GM12878 (cell line): ENCODE measurements at regions of chr12 and their contacts with region 1.

Region 1: GRCh38 chr12:45543906-45544315 is 185.6 kb upstream of the ARID2 start:
- DNase-seq: peak; percentile 56
- ATAC-seq: peak; percentile 99
- H3K4me3 ChIP-seq: no peak overlapping the region
- H3K27ac ChIP-seq: no peak overlapping the region
- H3K4me1 ChIP-seq: no peaks in the 10 kb centered on the region
- H3K27me3 ChIP-seq: no peaks in the 10 kb centered on the region
- CTCF ChIP-seq: peak; percentile 73 to 84 (median 83)
- EP300 ChIP-seq: no peak
- POLR2A ChIP-seq: no peak
- RAD21 ChIP-seq: peak; percentile 96

Region 2: DNA sequence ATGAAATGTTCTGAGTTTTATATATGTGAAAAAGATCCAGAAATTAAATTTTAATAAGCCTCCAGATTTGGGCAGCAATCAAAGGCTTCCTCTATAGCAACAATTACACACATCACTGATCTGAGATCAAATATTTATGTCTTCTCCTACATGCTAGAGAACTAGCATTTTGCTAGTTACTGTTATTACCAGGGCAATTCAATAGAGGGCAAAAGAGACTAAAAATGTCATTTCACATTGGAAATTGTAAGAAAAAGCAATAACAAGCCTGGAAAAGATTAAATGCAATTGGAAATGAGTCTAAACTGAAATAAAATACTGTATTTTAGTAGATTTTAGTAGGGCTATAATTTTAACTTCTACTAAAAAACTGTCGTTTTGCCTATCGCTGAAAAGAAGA is 360.7 kb before region 1 on chr12:
- CTCF ChIA-PET with region 1: interaction called, 14 read pairs
- POLR2A ChIA-PET with region 1: no interaction called
- RAD21 ChIA-PET with region 1: interaction called, 8 read pairs
- SMC1A ChIA-PET with region 1: interaction called, 4 read pairs
- in situ Hi-C with region 1: no loop called
- intact Hi-C with region 1: no loop called
- DNase-seq: no peak
- ATAC-seq: 0 out of 3 replicates have a peak, but pooled peaks have one; percentile 28
- H3K4me3 ChIP-seq: no peak overlapping the region
- H3K27ac ChIP-seq: no peak overlapping the region
- H3K4me1 ChIP-seq: no peaks in the 10 kb centered on the region
- H3K27me3 ChIP-seq: no peaks in the 10 kb centered on the region
- CTCF ChIP-seq: peak in 2 of 3 experiments; percentile 3 to 30; a peak in 3 of 6 replicates
- EP300 ChIP-seq: no peak
- POLR2A ChIP-seq: no peak
- RAD21 ChIP-seq: peak; percentile 47

Region 3: DNA sequence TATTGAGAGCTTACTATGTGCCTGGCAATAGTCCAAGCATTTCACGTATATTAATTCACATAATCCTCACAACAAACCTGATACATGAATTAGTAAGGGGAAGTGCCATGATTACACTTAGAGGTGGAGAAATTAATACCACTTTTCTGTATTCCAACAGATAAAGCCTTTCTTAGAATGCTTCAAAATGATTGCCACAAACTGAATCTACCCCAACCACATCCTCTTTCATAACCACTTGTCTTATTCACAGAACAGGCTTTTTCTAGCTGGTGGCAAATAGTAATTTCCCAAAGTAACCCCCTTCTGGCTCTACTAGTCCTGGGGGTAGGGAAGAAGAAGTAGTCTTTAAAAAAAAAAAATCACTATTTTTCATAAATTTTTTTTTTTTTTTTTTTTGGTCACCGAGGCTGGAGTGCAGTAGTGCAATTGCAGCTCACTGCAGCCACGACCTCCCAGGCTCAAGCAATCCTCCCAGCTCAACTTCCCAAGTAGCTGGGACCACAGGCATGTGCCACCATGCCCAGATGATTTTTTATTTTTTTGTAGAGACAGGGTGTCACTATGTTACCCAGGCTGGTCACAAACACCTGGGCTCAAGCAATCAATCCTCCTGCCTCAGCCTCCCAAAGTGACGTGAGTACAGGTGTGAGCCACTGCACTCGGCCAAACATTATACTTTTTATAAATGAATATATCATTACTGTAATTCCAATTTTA is 126.6 kb after region 1 on chr12:
- CTCF ChIA-PET with region 1: interaction called, 6 read pairs
- POLR2A ChIA-PET with region 1: interaction called, 3 read pairs
- RAD21 ChIA-PET with region 1: interaction called, 15 read pairs
- SMC1A ChIA-PET with region 1: interaction called, 4 read pairs
- in situ Hi-C with region 1: no loop called
- intact Hi-C with region 1: loop called (anchors 5 kb)
- DNase-seq: peak; percentile 53
- ATAC-seq: peak; percentile 75
- H3K4me3 ChIP-seq: no peak overlapping the region
- H3K27ac ChIP-seq: no peak overlapping the region
- H3K4me1 ChIP-seq: peaks cover 19% of the 10 kb centered on the region
- H3K27me3 ChIP-seq: no peaks in the 10 kb centered on the region
- CTCF ChIP-seq: no peak
- EP300 ChIP-seq: peak in 1 of 2 experiments; percentile 23; a peak in 1 of 4 replicates
- POLR2A ChIP-seq: no peak
- RAD21 ChIP-seq: no peak

Region 4: DNA sequence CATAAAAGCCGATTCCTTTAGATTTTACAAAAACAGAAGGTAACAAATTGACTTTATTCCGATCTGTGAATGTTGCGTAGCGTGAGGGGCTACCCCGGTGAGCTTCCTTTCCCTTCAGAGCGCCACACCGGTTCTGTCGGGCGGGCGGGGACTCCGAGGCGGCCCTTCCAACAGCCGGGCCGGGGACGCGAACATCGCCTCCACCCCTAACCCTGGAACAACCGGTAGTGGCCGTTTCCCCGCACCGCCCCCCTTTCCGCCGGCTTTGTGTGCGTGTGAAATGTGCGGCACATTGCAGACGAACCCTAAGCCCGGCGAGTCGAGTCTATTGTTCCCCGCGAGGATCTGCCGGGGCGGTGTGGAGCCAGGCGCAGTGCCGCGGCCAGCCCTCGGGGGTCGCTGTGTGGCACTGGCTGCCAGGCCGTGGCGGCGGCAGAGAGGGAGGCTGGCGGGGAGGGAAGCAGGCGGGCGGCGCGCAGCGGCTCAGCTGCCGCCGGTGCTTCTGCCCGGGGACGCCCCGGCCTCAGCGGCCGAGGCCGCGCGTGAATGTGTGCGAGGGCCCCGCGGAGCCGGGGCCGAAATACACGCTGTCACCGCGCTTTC is 184.8 kb after region 1 on chr12:
- CTCF ChIA-PET with region 1: interaction called, 109 read pairs
- POLR2A ChIA-PET with region 1: no interaction called
- RAD21 ChIA-PET with region 1: interaction called, 79 read pairs
- SMC1A ChIA-PET with region 1: interaction called, 67 read pairs
- in situ Hi-C with region 1: no loop called
- intact Hi-C with region 1: loop called (anchors 1 kb)
- DNase-seq: peak; percentile 87
- ATAC-seq: peak; percentile 73
- H3K4me3 ChIP-seq: peak overlapping the region; percentile 93
- H3K27ac ChIP-seq: peak overlapping the region; percentile 95
- H3K4me1 ChIP-seq: no peaks in the 10 kb centered on the region
- H3K27me3 ChIP-seq: no peaks in the 10 kb centered on the region
- CTCF ChIP-seq: peak; percentile 94 to 98 (median 96)
- EP300 ChIP-seq: peak; percentile 36 to 45; a peak in 1 of 4 replicates
- POLR2A ChIP-seq: peak; percentile 96
- RAD21 ChIP-seq: peak; percentile 64

Region 5: GRCh38 chr12:45914090-45914489 is 370.2 kb after region 1 on chr12:
- CTCF ChIA-PET with region 1: interaction called, 5 read pairs
- POLR2A ChIA-PET with region 1: no interaction called
- RAD21 ChIA-PET with region 1: interaction called, 6 read pairs
- SMC1A ChIA-PET with region 1: interaction called, 7 read pairs
- in situ Hi-C with region 1: no loop called
- intact Hi-C with region 1: loop called (anchors 10 kb)
- DNase-seq: no peak
- ATAC-seq: peak; percentile 50
- H3K4me3 ChIP-seq: no peak overlapping the region
- H3K27ac ChIP-seq: no peak overlapping the region
- H3K4me1 ChIP-seq: no peaks in the 10 kb centered on the region
- H3K27me3 ChIP-seq: no peaks in the 10 kb centered on the region
- CTCF ChIP-seq: no peak
- EP300 ChIP-seq: no peak
- POLR2A ChIP-seq: no peak
- RAD21 ChIP-seq: no peak